A673 (cell line): ENCODE measurements at regions of chr17 and their contacts with region 1.

Region 1: DNA sequence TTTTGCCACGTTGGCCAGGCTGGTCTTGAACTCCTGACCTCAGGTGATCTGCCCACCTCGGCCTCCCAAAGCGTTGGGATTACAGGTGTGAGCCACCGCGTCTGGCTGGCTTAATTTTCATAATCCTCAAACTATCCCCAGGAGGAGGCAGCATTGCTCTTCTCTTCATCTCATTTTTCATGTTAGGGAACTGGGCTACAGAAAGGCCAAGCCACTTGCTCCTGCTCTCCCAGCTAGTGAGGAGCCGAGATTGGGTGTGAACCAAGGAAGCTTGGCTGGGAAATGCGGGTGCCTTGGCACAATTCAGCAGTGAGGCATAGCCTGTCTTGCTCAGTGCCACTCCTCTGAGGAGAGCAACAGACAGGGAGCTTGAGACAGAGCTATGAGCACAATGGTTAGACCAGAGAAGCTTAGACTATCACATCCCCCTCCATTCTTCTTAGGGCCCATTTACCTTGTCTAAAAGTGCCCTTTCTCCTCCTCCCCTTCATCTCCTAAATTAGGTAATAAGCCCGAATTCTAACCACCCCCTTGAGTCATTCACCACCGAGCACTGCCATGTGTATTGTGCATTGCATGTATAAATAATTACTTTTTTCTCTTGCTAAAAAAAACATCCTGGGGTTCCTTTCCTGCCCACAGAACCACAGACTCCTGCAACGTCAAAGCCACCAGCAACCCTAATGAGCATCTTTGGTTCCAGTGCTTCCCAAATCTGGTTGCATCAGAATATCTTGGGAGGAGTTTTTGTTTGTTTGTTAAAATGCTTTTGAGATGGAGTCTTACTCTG is 20.0 kb upstream of the KIF19 start:
- DNase-seq: peak; percentile 21
- H3K4me3 ChIP-seq: no peak overlapping the region
- H3K27ac ChIP-seq: no peak overlapping the region
- H3K4me1 ChIP-seq: no peaks in the 10 kb centered on the region
- H3K27me3 ChIP-seq: no peaks in the 10 kb centered on the region
- CTCF ChIP-seq: 0 out of 2 replicates have a peak, but pooled peaks have one; percentile 11

Region 2: GRCh38 chr17:74354123-74354522 is 48.1 kb after region 1 on chr17:
- CTCF ChIA-PET with region 1: no interaction called
- POLR2A ChIA-PET with region 1: no interaction called
- intact Hi-C with region 1: loop called (anchors 10 kb)
- DNase-seq: peak; percentile 73
- H3K4me3 ChIP-seq: no peak overlapping the region
- H3K27ac ChIP-seq: no peak overlapping the region
- H3K4me1 ChIP-seq: no peaks in the 10 kb centered on the region
- H3K27me3 ChIP-seq: peaks cover 70% of the 10 kb centered on the region
- CTCF ChIP-seq: peak; percentile 98

Region 3: DNA sequence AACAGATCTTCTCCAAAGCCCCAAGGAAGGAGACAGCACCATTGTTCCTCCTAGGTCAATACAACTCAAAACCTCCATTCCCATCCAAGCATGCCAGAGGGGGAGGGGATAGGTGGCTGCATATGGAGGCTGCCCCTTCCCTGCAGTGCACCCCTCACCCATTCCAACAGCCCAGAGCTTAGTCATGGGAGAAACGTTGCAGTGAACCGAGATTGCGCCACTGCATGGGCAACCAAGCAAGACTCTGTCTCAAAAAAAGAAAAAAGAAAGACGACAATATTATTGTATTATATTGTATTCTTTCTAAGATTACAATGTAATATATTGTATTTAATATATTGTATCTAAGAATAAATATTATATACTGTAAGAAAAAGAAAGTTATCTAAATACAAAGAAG is 353.8 kb after region 1 on chr17:
- CTCF ChIA-PET with region 1: interaction called, 10 read pairs
- POLR2A ChIA-PET with region 1: no interaction called
- intact Hi-C with region 1: no loop called
- DNase-seq: no peak
- H3K4me3 ChIP-seq: no peak overlapping the region
- H3K27ac ChIP-seq: no peak overlapping the region
- H3K4me1 ChIP-seq: no peaks in the 10 kb centered on the region
- H3K27me3 ChIP-seq: peaks cover 59% of the 10 kb centered on the region
- CTCF ChIP-seq: no peak